CD4-positive, alpha-beta T cell (primary cell): ENCODE measurements at regions of chr3 and their contacts with region 1.

Region 1: GRCh38 chr3:66495646-66496045 is 5.2 kb downstream of the LRIG1 start:
- DNase-seq: no peak
- ATAC-seq: no peak
- H3K4me3 ChIP-seq: no peak overlapping the region
- H3K4me3 Mint-ChIP-seq: peak overlapping the region; percentile 45
- H3K27ac ChIP-seq: no peak overlapping the region
- H3K27ac Mint-ChIP-seq: no peak overlapping the region
- H3K4me1 ChIP-seq: peaks cover 65% of the 10 kb centered on the region
- H3K4me1 Mint-ChIP-seq: peaks cover 91% of the 10 kb centered on the region
- H3K27me3 ChIP-seq: no peaks in the 10 kb centered on the region
- H3K27me3 Mint-ChIP-seq: no peaks in the 10 kb centered on the region
- CTCF ChIP-seq: no peak

Region 2: DNA sequence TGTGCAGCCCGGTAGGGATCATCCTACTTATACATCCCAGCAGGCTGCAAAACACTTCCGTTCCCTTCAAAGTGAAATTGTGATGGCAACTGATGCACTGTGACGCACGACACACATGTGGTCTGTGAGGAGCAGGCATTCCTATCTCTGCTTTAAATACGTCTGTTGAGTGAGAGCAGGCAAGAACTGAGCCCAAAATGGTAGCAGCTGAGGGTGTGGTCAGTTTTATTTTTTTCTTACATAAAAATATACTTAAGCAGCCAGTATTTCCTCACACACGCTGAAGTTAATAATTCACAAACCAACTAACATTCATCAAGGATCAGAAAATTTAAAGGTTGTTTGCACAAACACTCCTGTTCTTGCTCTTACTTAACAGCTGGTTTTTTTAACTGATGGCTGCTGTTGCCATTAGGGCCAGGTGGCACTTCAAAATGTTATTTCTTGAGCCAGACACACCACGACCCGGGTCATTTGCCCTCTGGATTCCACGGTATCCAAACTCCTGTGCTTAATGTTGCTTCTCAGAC is 18.7 kb before region 1 on chr3:
- CTCF ChIA-PET with region 1: interaction called, 7 read pairs
- POLR2A ChIA-PET with region 1: interaction called, 22 read pairs
- intact Hi-C with region 1: loop called (anchors 2 kb)
- DNase-seq: no peak
- ATAC-seq: no peak
- H3K4me3 ChIP-seq: no peak overlapping the region
- H3K4me3 Mint-ChIP-seq: no peak overlapping the region
- H3K27ac ChIP-seq: no peak overlapping the region
- H3K27ac Mint-ChIP-seq: no peak overlapping the region
- H3K4me1 ChIP-seq: peaks cover 74% of the 10 kb centered on the region
- H3K4me1 Mint-ChIP-seq: peaks cover 23% of the 10 kb centered on the region
- H3K27me3 ChIP-seq: no peaks in the 10 kb centered on the region
- H3K27me3 Mint-ChIP-seq: no peaks in the 10 kb centered on the region
- CTCF ChIP-seq: no peak

Region 3: DNA sequence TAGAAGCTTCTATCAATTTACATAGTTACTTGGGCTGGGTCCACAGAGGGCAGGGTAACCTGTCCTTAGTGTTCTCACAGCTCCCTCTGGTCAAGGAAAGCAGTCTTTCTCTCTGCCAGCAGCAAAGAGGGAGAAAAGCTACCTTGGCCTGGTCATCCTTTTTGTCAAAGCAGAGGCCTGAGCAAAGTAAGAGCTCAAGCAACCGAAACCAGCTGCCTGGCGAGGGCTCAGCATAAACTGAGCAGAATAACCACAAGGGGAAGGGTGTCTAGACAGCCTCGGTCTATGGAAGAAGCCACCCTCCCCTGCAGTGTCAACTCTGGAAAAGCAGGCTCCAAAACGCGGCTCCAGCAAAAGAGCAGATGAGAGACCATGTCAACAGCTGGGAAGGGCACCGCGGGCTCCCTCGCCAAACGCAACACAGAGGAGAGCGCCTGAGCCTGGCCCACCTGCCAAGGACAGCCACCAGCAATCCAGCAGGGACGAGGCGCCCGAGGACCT is 12.2 kb before region 1 on chr3:
- CTCF ChIA-PET with region 1: interaction called, 6 read pairs
- POLR2A ChIA-PET with region 1: interaction called, 22 read pairs
- intact Hi-C with region 1: loop called in 1 of 2 experiments (anchors 2 kb)
- DNase-seq: peak in 6 of 14 experiments; percentile 26 to 69 (median 42)
- ATAC-seq: peak; percentile 66
- H3K4me3 ChIP-seq: no peak overlapping the region
- H3K4me3 Mint-ChIP-seq: peak overlapping the region; percentile 40
- H3K27ac ChIP-seq: no peak overlapping the region
- H3K27ac Mint-ChIP-seq: peak overlapping the region; percentile 79
- H3K4me1 ChIP-seq: peaks cover 70% of the 10 kb centered on the region
- H3K4me1 Mint-ChIP-seq: peaks cover 46% of the 10 kb centered on the region
- H3K27me3 ChIP-seq: no peaks in the 10 kb centered on the region
- H3K27me3 Mint-ChIP-seq: no peaks in the 10 kb centered on the region
- CTCF ChIP-seq: no peak